Naive thymus-derived CD4-positive, alpha-beta T cell (primary cell): ENCODE measurements at regions of chr10 and their contacts with region 1.

Region 1: GRCh38 chr10:103451831-103452505 is at the start of gene CALHM2:
- DNase-seq: peak; percentile 24 to 72 (median 43)
- ATAC-seq: peak; percentile 79
- H3K4me3 ChIP-seq: peak within 1 kb of the TSS; percentile 77
- H3K4me3 Mint-ChIP-seq: peak within 1 kb of the TSS; percentile 82 to 97 (median 90)
- H3K27ac ChIP-seq: peak within 1 kb of the TSS; percentile 63
- H3K27ac Mint-ChIP-seq: peak within 1 kb of the TSS; percentile 51 to 96 (median 79)
- H3K4me1 ChIP-seq: peaks cover 18 to 34% of the 10 kb centered on the region in 2 donors
- H3K4me1 Mint-ChIP-seq: peaks cover 27 to 56% (median 47%) of the 10 kb centered on the region in 7 donors
- H3K27me3 ChIP-seq: no peaks in the 10 kb centered on the region
- H3K27me3 Mint-ChIP-seq: no peaks in the 10 kb centered on the region
- total RNA-seq, gene CALHM2: 3.4 to 67.2 (median 19.3) TPM

Region 2: DNA sequence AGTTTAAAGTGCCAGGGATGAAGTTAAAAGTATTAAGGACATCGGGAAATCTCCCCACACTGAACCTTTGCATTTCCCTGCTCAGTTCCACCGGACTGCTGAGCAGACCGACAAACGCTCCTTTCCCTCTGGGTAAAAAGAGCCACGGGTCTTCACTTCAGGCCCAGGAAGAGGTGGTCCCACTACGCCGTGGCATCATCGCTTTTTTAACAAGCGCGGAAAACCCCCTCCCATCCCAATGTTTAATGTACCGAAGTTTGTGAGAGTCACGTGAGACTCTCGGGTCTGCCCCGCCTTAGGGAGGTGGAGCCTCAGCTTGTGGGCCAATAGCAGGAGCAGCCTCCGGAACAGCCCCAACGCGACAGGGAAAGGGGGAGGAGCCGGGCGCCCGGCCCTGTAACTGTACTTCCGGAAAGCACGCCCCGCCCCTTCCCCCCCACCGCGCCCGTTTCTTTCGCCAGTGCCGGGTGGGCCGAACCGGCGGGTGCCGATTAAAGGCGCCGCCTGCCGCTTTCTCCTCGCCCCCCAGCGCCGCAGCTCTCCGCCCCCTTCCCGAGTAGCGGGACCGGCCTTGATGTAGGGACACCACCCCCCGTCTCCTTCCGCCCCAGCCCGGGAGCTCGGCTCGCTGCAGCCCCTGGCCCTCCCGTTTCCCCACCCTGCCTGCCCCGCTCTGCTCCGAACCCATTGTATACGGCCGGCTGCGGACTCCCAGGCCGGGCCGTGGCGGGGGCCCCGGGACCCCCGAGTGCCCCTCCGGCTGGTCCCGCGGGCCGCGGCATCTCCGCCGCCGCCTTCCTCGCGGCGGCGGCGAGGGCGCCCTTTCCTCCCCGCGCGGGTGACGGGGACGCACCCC is 809.9 kb before region 1 on chr10:
- CTCF ChIA-PET with region 1: no interaction called
- POLR2A ChIA-PET with region 1: no interaction called
- intact Hi-C with region 1: no loop called
- DNase-seq: peak; percentile 85 to 99 (median 93)
- ATAC-seq: peak; percentile 84
- H3K4me3 ChIP-seq: peak overlapping the region; percentile 85
- H3K4me3 Mint-ChIP-seq: peak overlapping the region; percentile 90 to 97 (median 93)
- H3K27ac ChIP-seq: peak overlapping the region; percentile 98
- H3K27ac Mint-ChIP-seq: peak overlapping the region; percentile 84 to 98 (median 95)
- H3K4me1 ChIP-seq: peaks cover 8 to 13% of the 10 kb centered on the region in 2 donors
- H3K4me1 Mint-ChIP-seq: peaks cover 13 to 29% (median 19%) of the 10 kb centered on the region in 7 donors
- H3K27me3 ChIP-seq: no peaks in the 10 kb centered on the region
- H3K27me3 Mint-ChIP-seq: peaks cover 0 to 6% (median 0%) of the 10 kb centered on the region in 5 donors

Region 3: DNA sequence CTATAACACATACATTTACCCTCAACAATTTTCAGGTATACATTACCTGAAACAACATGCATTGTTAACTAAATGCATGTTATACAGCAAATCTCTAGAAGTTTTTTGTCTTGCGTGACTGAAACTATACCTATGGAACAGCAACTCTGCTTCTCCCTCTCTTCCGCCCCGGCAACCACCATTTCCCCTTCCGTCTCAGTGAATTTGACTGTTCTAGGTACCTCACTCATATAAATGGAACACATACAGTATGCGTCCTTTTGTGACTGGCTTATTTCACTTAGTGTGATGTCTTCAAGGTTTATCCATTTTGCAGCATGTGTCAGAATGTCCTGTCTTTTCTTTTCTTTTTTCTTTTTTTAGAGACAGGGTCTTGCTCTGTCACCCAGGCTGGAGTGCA is 22.3 kb before region 1 on chr10:
- CTCF ChIA-PET with region 1: interaction called, 3 read pairs
- POLR2A ChIA-PET with region 1: interaction called, 3 read pairs
- intact Hi-C with region 1: loop called in 1 of 2 experiments (anchors 1 kb)
- DNase-seq: peak in 3 of 9 donors; percentile 18 to 39 (median 19)
- ATAC-seq: peak; percentile 54
- H3K4me3 ChIP-seq: no peak overlapping the region
- H3K4me3 Mint-ChIP-seq: peak overlapping the region; percentile 31 to 81 (median 73)
- H3K27ac ChIP-seq: peak overlapping the region; percentile 19
- H3K27ac Mint-ChIP-seq: peak overlapping the region in 7 of 9 donors; percentile 18 to 79 (median 33)
- H3K4me1 ChIP-seq: peaks cover 0 to 18% of the 10 kb centered on the region in 2 donors
- H3K4me1 Mint-ChIP-seq: peaks cover 16 to 58% (median 40%) of the 10 kb centered on the region in 7 donors
- H3K27me3 ChIP-seq: no peaks in the 10 kb centered on the region
- H3K27me3 Mint-ChIP-seq: no peaks in the 10 kb centered on the region

Region 4: GRCh38 chr10:103470761-103471653 is 19.0 kb after region 1 on chr10:
- CTCF ChIA-PET with region 1: no interaction called
- POLR2A ChIA-PET with region 1: interaction called, 12 read pairs
- intact Hi-C with region 1: loop called (anchors 1 kb)
- DNase-seq: peak in 6 of 9 donors; percentile 11 to 72 (median 24)
- ATAC-seq: peak; percentile 92
- H3K4me3 ChIP-seq: peak overlapping the region; percentile 24
- H3K4me3 Mint-ChIP-seq: peak overlapping the region; percentile 29 to 81 (median 64)
- H3K27ac ChIP-seq: peak overlapping the region; percentile 9
- H3K27ac Mint-ChIP-seq: peak overlapping the region in 7 of 9 donors; percentile 43 to 97 (median 67)
- H3K4me1 ChIP-seq: peaks cover 18 to 27% of the 10 kb centered on the region in 2 donors
- H3K4me1 Mint-ChIP-seq: peaks cover 20 to 70% (median 29%) of the 10 kb centered on the region in 7 donors
- H3K27me3 ChIP-seq: no peaks in the 10 kb centered on the region
- H3K27me3 Mint-ChIP-seq: no peaks in the 10 kb centered on the region